Body of pancreas (tissue), 4 donors: ENCODE measurements at regions of chr10 and their contacts with region 1.

Region 1: GRCh38 chr10:14822879-14823755 is 14.7 kb downstream of the CDNF start:
- DNase-seq: peak; percentile 25 to 53 (median 42)
- ATAC-seq: peak; percentile 58
- H3K4me3 ChIP-seq: no peak overlapping the region
- H3K27ac ChIP-seq: no peak overlapping the region
- H3K4me1 ChIP-seq: peaks cover 4% of the 10 kb centered on the region
- H3K27me3 ChIP-seq: no peaks in the 10 kb centered on the region
- CTCF ChIP-seq: peak in 6 of 7 experiments; percentile 44 to 71 (median 61)
- POLR2A ChIP-seq: no peak

Region 2: GRCh38 chr10:14507176-14507575 is 315.9 kb before region 1 on chr10:
- intact Hi-C with region 1: loop called (anchors 10 kb)
- DNase-seq: no peak
- ATAC-seq: no peak
- H3K4me3 ChIP-seq: no peak overlapping the region
- H3K27ac ChIP-seq: no peak overlapping the region
- H3K4me1 ChIP-seq: no peaks in the 10 kb centered on the region
- H3K27me3 ChIP-seq: no peaks in the 10 kb centered on the region
- CTCF ChIP-seq: no peak
- POLR2A ChIP-seq: no peak

Region 3: DNA sequence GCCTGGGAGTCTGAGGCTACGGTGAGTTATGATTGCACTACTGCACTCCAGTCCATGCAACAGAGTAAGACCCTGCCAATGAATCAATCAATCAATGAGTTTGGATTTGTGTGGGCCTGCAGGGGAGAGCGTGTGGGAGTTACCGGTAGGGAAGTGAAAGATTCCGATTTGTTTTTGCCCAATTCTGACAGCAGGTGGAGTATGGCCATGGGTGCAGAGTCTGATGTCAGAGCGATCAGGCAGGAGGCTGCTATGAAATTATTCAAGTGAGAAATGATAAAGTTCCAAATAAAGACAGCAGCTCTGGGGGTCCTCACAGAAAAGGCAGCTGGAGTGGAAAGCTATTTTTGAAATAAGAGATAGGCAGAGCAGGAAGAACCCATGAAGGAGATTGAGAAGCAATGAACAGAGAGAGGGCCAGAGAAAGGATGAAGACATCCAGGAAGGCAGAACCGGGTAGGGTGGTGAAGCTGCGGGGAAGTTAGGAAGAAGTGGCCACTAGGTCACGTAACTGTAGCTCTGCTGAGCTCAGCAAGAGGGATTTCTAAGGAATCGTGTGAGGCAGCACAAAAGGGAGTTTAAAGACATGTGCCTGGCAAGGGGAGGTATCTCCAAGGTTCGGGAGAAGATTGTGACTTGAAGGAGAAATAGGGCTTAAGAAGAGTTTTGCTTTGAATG is 439.1 kb after region 1 on chr10:
- intact Hi-C with region 1: no loop called
- DNase-seq: peak; percentile 22 to 31 (median 28)
- ATAC-seq: peak; percentile 67
- H3K4me3 ChIP-seq: no peak overlapping the region
- H3K27ac ChIP-seq: peak overlapping the region in 2 of 4 donors; percentile 1 to 7
- H3K4me1 ChIP-seq: peaks cover 12% of the 10 kb centered on the region
- H3K27me3 ChIP-seq: no peaks in the 10 kb centered on the region
- CTCF ChIP-seq: peak in 6 of 7 experiments; percentile 9 to 60 (median 49)
- POLR2A ChIP-seq: no peak